ENCODE measurements at regions of chr18 and their contacts with region 1.

Region 1: GRCh38 chr18:79650959-79651358 is 28.6 kb upstream of the CTDP1 start:
- H3K4me3 Mint-ChIP-seq: no peak overlapping the region
- H3K27ac Mint-ChIP-seq: no peak overlapping the region
- H3K4me1 Mint-ChIP-seq: no peaks in the 10 kb centered on the region
- H3K27me3 Mint-ChIP-seq: peaks cover 13% of the 10 kb centered on the region

Region 2: DNA sequence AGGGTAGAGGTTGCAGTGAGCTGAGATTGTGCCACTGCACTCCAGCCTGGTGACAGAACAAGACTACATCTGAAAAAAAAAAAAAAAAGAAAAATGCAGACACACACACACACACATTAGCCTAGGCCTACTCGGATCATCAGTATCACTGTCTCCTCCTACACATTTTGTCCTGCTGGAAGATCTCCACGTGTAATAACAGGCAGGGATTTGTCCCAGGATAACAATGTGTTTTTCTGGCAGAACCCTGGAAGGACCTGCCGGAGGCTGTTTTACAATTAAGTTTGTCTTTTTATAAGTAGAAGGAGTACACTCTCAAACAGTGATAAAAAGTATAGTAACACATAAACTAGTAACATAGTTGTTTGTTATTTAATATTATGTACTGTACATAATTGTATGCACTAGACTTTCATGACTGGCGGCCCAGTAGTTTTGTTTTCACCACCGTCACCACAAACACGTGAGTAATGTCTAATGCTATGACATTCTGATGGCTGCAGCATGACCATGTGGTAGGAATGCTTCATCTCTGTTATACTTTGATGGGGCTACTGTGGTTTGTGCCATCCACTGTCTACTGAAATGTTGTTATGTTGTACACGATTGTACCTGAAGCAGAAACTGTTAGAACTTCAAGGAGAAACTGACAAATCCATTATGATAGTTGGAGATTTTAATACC is 451.1 kb before region 1 on chr18:
- intact Hi-C with region 1: loop called (anchors 5 kb)
- H3K4me3 Mint-ChIP-seq: no peak overlapping the region
- H3K27ac Mint-ChIP-seq: no peak overlapping the region
- H3K4me1 Mint-ChIP-seq: no peaks in the 10 kb centered on the region
- H3K27me3 Mint-ChIP-seq: no peaks in the 10 kb centered on the region

Region 3: GRCh38 chr18:79634593-79635426 is 16.1 kb before region 1 on chr18:
- intact Hi-C with region 1: no loop called
- H3K4me3 Mint-ChIP-seq: peak overlapping the region; percentile 13
- H3K27ac Mint-ChIP-seq: peak overlapping the region; percentile 84
- H3K4me1 Mint-ChIP-seq: peaks cover 41% of the 10 kb centered on the region
- H3K27me3 Mint-ChIP-seq: peaks cover 31% of the 10 kb centered on the region

Region 4: GRCh38 chr18:79698668-79699335 is 47.8 kb after region 1 on chr18:
- intact Hi-C with region 1: no loop called
- H3K4me3 Mint-ChIP-seq: no peak overlapping the region
- H3K27ac Mint-ChIP-seq: no peak overlapping the region
- H3K4me1 Mint-ChIP-seq: no peaks in the 10 kb centered on the region
- H3K27me3 Mint-ChIP-seq: no peaks in the 10 kb centered on the region

Region 5: GRCh38 chr18:79866889-79867574 is 216.1 kb after region 1 on chr18:
- intact Hi-C with region 1: no loop called
- H3K4me3 Mint-ChIP-seq: no peak overlapping the region
- H3K27ac Mint-ChIP-seq: no peak overlapping the region
- H3K4me1 Mint-ChIP-seq: no peaks in the 10 kb centered on the region
- H3K27me3 Mint-ChIP-seq: no peaks in the 10 kb centered on the region

Region 6: DNA sequence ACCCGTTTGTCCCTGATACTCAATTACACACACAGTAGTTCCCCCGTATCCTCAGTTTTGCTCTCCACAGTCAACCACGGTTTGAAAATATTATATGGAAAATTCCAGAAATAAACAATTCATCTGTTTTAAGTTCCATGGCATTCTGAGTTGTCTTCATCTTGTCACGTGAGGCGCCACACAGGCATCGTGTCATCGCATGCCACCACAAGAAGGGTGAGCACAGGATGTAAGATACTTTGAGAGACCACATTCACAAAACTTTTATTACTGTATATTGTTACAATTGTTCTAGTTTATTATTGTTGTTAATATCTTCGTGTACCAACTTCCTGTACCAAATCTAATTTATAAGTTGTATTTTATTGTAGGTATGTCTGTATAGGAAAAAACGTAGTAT is 475.8 kb after region 1 on chr18:
- intact Hi-C with region 1: no loop called
- H3K4me3 Mint-ChIP-seq: no peak overlapping the region
- H3K27ac Mint-ChIP-seq: no peak overlapping the region
- H3K4me1 Mint-ChIP-seq: peaks cover 6% of the 10 kb centered on the region
- H3K27me3 Mint-ChIP-seq: no peaks in the 10 kb centered on the region

Measured in dendritic cell treated with granulocyte-macrophage colony-stimulating factor and Interleukin-4, amounts not matched to agents 40 ng/mL and 50 ng/mL, for 4 days (primary cell).